Activated CD4-positive, alpha-beta T cell treated with anti-CD3 and anti-CD28 coated beads, Interleukin-2, amount 10 ng/mL, durations not matched to agents 7 days and 5 days (primary cell): ENCODE measurements at regions of chr3 and their contacts with region 1.

Region 1: DNA sequence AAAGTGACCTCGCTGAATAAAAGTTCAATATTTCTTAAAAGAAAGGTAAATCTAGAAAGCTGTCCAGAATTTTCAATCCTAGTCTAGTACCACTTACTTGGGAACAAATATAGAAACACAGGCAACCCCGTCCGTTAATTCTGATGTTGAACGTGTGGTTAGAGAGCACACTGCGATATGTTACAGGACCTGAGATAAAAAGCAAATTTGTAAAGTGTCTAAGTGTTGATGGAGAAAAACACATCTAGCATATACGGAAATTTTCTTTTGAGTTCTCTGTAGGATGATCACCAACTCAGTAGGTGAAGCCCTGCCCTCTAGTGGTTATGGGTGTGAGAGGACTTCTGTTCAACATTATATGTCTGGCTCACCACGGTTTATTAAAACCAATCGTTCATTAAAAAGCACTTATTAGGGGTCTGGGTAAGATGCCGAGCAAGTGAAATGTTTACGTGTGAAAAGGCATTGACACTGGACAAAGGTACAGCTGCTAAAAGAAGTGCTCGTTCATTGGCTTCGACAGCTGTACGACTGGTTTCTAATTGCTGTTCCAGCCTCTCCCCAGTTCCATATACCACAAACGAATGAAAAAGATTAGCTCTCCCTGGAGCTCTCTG is 1.0 kb upstream of the ATP2C1 start:
- DNase-seq: peak; percentile 84
- H3K4me3 Mint-ChIP-seq: peak overlapping the region; percentile 94
- H3K27ac Mint-ChIP-seq: peak overlapping the region; percentile 98
- H3K4me1 Mint-ChIP-seq: peaks cover 37% of the 10 kb centered on the region
- H3K27me3 Mint-ChIP-seq: no peaks in the 10 kb centered on the region

Region 2: GRCh38 chr3:130759699-130760338 is 133.0 kb before region 1 on chr3:
- CTCF ChIA-PET with region 1: interaction called, 13 read pairs
- POLR2A ChIA-PET with region 1: interaction called, 3 read pairs
- DNase-seq: peak; percentile 70
- H3K4me3 Mint-ChIP-seq: no peak overlapping the region
- H3K27ac Mint-ChIP-seq: no peak overlapping the region
- H3K4me1 Mint-ChIP-seq: peaks cover 13% of the 10 kb centered on the region
- H3K27me3 Mint-ChIP-seq: peaks cover 1% of the 10 kb centered on the region

Region 3: GRCh38 chr3:130857326-130858026 is 35.4 kb before region 1 on chr3:
- CTCF ChIA-PET with region 1: no interaction called
- POLR2A ChIA-PET with region 1: no interaction called
- DNase-seq: no peak
- H3K4me3 Mint-ChIP-seq: no peak overlapping the region
- H3K27ac Mint-ChIP-seq: no peak overlapping the region
- H3K4me1 Mint-ChIP-seq: peaks cover 5% of the 10 kb centered on the region
- H3K27me3 Mint-ChIP-seq: peaks cover 16% of the 10 kb centered on the region